GM18951 (cell line): ENCODE measurements at regions of chr17 and their contacts with region 1.

Region 1: DNA sequence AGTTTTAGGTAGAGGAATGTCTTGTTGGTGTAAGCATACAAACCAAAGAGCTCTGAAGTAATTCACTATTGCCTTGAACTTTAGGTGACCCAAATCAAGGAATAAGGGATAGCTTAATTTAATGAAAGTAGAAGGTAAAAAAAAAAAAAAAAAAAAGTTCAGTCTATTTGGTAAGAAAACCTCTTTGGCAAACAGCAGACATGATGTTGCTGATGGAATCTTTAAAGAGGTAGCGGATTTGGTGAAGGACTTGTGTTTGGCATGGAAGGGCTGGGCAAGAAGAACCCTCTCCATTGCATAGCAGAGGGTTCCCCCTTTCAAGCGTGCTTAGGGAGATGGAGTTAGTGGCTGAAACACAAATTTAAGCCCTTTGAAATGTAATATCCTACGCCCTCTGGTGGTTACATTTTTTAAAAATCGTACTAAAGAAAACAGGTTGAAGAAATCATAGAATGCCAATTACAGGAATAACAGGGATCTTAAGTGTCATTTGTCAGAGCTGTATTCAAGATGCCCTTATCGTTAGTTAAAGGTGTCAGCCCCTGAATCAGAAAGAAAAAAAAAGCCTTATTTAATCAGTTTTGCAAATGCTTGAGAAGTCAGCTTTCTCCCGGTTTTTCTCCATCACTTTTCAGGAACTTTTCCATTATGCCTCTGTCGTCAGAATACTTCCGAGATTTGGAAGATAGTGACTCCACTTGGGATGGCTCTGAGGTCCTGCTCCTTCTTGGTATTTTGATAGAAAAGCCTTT is 383.1 kb downstream of the KCNJ2 start:
- POLR2A ChIP-seq: no peak

Region 2: DNA sequence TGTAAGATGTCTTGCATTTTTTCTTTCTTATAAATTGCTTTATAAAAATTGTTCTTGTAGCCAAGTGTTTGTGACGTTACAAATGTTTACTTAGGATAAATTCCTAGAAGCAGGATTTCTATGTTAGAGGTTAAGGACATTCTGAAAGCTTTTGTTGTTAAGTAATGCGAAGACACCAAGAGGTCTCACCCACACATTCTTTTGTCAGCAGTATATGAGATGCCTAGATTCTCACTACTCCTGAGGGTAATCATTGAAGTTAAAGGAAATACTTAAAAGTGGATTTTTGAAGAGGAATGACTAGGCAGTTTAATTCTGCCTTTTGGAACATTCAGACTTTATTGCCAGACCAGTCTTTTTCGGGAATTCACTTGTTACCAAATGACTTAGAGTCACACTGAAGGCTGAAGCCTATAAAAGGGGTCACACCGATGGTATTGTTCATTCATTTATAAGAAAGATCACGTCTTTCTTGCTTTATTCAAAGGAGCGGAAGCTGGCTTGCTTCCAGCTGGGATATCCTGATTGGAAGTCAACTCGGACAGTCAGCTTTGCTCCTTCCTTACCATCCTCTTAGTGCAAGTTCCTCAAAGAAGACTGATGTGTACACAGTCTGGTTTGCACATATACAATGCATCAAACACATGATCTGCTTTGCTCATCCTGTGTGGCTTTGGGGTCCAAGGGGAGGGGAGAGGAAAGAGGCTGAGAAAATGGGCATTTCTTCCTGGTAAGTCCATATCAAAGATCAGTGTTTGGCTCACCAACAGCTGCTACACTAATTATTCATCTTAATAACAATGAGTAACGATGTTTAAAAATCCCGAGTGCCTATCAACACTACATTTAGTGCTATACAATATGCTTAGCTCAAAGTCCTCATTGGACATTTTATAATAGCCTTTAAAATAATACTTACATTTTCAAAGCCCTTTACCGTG is 977.9 kb before region 1 on chr17:
- in situ Hi-C with region 1: loop called (anchors 25 kb)
- POLR2A ChIP-seq: no peak

Region 3: DNA sequence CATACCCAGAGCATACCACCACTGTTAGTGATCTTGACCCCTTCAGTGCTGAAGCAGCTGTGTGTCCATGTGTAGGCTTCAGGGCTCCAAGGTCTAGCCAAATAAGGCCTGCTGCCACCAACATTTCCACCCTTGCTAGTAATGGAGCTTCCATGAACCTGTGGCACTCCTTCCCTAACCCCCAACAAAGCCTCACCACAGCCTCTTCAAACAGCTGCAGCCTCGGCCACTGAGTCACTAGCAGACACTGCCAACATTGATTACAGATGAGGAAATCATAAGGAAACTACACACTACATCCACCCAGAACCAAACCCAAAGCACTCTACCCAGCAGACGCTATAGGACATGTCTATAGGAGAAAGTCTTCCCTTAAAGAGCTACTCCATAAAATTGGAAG is 227.6 kb after region 1 on chr17:
- in situ Hi-C with region 1: no loop called
- POLR2A ChIP-seq: no peak